A549 (cell line): ENCODE measurements at regions of chr18 and their contacts with region 1.

Region 1: DNA sequence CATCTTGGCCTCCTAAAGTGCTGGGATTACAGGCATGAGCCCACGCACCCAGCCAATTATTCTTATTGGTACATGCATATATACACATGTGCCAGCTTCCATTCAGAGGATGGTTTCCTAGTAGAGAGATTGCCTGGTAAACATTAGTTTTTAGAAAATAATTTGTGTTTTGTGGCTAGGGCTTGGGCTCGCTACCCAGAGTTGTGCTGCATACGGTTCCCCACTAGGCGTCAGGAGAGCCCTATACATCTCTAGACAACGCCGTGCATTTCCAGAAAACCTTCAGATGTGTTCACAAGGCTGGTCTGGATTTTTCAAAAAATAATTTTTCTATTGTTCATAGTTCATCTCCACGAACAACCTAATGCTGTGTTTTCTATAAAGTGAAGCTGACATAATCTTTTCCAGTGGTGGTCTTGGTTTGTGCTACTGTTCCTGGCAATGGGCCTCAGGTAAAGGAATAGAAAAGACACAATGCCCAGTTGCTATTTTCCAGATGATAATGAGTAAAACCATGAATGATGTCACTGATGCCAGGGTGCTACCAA is 14.7 kb upstream of the AFG3L2 start:
- DNase-seq: peak; percentile 46 to 53
- ATAC-seq: peak; percentile 84
- H3K4me3 ChIP-seq: no peak overlapping the region
- H3K27ac ChIP-seq: no peak overlapping the region
- H3K4me1 ChIP-seq: peaks cover 20% of the 10 kb centered on the region; the same call in 2 of the 3 replicates
- CTCF ChIP-seq: peak; percentile 83
- EP300 ChIP-seq: no peak
- POLR2A ChIP-seq: no peak
- RAD21 ChIP-seq: peak; percentile 90 to 94

Region 2: DNA sequence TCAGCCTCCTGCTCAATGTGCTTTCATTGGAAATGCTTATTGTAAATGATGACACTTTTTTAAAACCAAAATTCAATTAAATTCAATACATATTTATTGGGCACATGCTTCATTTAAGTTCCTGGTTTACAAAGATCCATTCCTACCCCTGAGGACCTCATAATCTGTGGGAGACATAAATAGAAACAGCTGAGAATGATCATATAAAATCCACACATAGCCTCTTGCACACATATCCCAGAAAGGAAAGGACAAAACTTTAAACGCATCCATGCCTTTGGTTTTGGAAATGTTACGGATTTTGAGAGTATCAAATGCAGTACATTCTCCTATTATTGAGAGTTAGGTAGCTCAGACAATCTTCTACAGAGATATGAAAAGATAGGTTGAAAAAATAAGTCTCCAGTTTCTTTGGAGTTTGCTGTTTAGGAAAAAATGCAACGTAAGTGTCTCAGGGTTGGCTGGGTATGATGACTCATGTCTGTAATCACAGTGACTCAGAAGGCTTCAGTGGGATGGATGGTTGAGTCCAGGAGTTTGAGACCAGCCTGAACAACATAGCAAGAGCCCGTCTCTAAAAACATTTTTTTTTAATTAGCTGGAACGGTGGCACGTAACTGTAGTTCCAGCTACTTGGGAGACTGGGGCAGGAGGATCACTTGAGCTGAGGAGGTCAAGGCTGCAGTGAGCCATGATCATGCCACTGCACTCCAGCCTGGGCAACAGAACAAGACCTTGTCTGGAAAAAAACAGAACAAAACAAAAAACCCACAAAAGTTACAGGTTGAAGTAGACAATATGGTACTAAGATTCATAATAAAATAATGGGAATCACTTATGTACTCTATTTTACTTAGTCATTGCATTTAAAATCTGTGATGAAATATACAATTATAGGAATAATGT is 12.2 kb after region 1 on chr18:
- CTCF ChIA-PET with region 1: interaction called, 17 read pairs
- POLR2A ChIA-PET with region 1: interaction called, 4 read pairs
- DNase-seq: peak; percentile 51 to 80
- ATAC-seq: peak in 1 of 2 experiments; percentile 54; a peak in 3 of 6 replicates
- H3K4me3 ChIP-seq: no peak overlapping the region
- H3K27ac ChIP-seq: peak overlapping the region; percentile 72 to 82
- H3K4me1 ChIP-seq: peaks cover 28% of the 10 kb centered on the region
- CTCF ChIP-seq: no peak
- EP300 ChIP-seq: no peak
- POLR2A ChIP-seq: no peak
- RAD21 ChIP-seq: no peak

Region 3: DNA sequence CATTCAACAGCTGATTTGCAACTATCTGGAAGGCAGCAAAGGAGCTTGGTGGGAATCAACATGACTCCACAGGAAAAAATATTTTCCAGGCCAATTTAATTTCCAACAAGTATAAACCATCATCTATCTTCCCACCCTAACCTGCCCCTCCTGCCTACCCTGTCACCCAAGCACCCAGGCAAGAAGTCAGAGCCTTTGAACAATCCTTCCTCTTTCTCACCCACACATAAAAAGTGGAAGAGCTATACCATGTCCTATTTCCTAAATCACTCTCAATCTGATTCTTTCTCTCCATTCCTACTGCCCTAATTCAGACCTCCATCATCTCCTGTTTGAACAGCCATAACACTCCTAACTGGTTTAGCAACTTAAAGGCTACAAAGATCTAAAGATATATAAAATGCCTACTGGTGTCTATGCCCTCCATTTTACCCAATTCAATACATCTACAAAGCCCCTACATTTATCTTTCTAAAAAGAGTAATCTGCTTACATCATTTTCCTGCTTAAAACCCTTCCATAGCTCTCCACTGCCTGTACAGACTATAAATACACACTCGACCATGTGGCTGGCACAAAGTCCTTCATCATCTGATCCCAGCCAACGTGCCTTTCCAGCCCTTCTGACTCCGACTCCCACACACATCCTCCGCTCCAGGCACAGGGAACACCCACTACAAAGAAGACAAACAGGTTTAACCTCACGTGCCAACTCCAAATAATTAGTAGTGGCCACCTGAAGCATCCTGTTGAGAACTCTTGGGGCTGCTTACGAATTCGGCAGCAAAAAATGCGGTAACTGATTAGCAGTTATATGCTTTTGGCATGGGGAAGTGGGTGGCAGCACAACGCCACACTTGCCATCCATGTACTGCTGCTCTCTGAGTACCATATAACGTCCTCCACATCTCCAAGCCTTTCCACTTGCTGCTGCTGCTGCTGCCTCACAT is 253.8 kb after region 1 on chr18:
- CTCF ChIA-PET with region 1: interaction called, 10 read pairs
- POLR2A ChIA-PET with region 1: no interaction called
- DNase-seq: no peak
- ATAC-seq: no peak
- H3K4me3 ChIP-seq: no peak overlapping the region
- H3K27ac ChIP-seq: no peak overlapping the region
- H3K4me1 ChIP-seq: peaks cover 27% of the 10 kb centered on the region
- CTCF ChIP-seq: no peak
- EP300 ChIP-seq: no peak
- POLR2A ChIP-seq: no peak
- RAD21 ChIP-seq: no peak

Region 4: GRCh38 chr18:12657684-12658425 is 266.2 kb after region 1 on chr18 and contains the start of gene SPIRE1:
- CTCF ChIA-PET with region 1: interaction called, 98 read pairs
- POLR2A ChIA-PET with region 1: interaction called, 3 read pairs
- DNase-seq: peak; percentile 16 to 53
- ATAC-seq: peak; percentile 89
- H3K4me3 ChIP-seq: peak within 1 kb of the TSS; percentile 95
- H3K27ac ChIP-seq: peak within 1 kb of the TSS; percentile 88 to 91
- H3K4me1 ChIP-seq: peaks cover 18% of the 10 kb centered on the region
- CTCF ChIP-seq: no peak
- EP300 ChIP-seq: no peak
- POLR2A ChIP-seq: peak; percentile 59
- RAD21 ChIP-seq: peak in 1 of 2 experiments; percentile 27; a peak in 1 of 5 replicates
- polyA plus RNA-seq, gene SPIRE1: 23.2 and 29.4 TPM in 2 replicates

Region 5: DNA sequence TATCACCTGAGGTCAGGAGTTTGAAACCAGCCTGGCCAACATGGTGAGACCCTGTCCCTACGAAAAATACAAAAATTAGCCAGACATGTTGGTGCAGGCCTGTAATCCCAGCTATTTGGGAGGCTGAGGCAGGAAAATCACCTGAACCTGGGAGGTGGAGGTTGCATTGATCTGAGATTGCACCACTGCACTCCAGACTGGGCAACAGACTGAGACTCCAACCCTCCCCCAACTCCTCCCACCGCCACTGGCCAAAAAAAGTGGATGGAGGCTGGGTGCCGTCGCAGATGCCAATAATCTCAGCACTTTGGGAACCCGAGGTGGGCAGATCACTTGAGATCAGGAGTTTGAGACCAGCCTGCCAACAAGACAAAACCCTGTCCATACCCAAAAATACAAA is 276.3 kb after region 1 on chr18:
- CTCF ChIA-PET with region 1: interaction called, 98 read pairs
- POLR2A ChIA-PET with region 1: no interaction called
- DNase-seq: no peak
- ATAC-seq: no peak
- H3K4me3 ChIP-seq: no peak overlapping the region
- H3K27ac ChIP-seq: no peak overlapping the region
- H3K4me1 ChIP-seq: no peaks in the 10 kb centered on the region
- CTCF ChIP-seq: no peak
- EP300 ChIP-seq: no peak
- POLR2A ChIP-seq: no peak
- RAD21 ChIP-seq: no peak